ENCODE measurements at regions of chr4 and their contacts with region 1.

Region 1: DNA sequence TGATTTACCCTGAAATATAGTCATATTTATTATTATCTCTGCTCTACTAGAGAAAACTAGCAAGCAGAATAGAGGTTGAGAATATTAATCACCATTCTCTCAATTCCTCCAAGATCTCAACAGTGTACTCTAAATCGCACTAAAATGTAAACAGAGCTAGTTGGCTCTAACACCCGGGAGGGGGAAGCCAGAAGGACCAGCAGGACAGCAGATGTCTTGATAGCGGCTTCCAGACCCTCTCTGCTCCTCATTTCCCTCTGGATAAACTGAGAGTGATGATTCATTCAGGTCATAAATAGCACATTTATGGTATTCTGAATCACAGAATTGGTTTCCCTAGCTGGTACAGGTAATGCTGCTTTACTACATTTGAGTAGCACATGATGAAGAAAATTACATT is 82.5 kb downstream of the TBC1D9 start:
- DNase-seq: no peak
- H3K4me3 ChIP-seq: no peak overlapping the region
- CTCF ChIP-seq: no peak

Region 2: DNA sequence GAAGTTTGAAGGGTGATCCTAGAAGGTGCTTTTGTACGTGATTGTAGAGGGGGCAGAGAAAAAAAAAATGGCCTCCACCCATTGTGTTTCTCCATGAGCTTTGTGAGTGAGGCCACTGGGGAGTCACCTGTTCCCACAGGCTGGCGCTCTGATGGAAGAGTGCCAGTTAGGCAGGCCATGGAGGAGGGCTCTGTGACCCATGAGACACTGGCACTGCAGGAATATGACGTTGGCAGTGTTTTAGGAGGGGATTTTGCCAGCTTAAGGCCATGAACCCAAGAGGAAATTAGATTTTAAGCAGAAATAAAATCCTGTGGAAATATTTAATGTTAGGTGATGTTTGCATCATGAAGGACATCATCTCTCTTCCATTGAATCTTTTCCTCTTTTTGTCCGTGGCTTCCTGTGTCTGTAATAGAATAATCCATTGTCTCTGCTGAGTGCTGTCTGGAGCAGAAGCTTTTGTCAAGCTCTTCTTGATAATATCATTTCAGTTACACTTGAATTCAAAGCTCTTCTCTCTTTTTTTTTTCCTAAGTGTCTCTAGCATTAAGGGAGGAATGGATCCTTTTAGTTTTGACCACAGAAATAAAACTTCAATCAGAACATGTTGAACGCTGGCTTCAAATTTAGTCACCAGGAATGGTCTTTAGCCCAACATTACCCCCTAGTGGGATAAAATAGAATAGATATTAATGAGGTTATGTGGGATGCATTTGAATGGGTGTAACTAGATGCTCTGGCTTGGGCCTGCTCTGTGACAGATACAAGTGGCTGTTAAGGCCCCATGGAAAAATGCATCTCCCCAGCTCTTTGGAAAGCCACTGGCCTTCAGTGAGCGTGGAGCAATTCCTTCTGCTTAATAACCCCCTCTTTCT is 63.9 kb before region 1 on chr4:
- in situ Hi-C with region 1: no loop called
- DNase-seq: peak; percentile 28
- H3K4me3 ChIP-seq: no peak overlapping the region
- CTCF ChIP-seq: peak; percentile 46

Region 3: GRCh38 chr4:140711910-140712309 is 38.2 kb after region 1 on chr4:
- in situ Hi-C with region 1: no loop called
- DNase-seq: no peak
- H3K4me3 ChIP-seq: no peak overlapping the region
- CTCF ChIP-seq: no peak

Region 4: GRCh38 chr4:140790765-140791164 is 117.0 kb after region 1 on chr4:
- in situ Hi-C with region 1: loop called (anchors 5 kb)
- DNase-seq: no peak
- H3K4me3 ChIP-seq: no peak overlapping the region
- CTCF ChIP-seq: no peak